HepG2 (cell line): ENCODE measurements at regions of chr1 and their contacts with region 1.

Region 1: GRCh38 chr1:6350416-6351088 is 43.0 kb downstream of the ACOT7 start:
- DNase-seq: no peak
- ATAC-seq: no peak
- H3K4me3 ChIP-seq: no peak overlapping the region
- H3K27ac ChIP-seq: no peak overlapping the region
- H3K4me1 ChIP-seq: peaks cover 42% of the 10 kb centered on the region
- H3K27me3 ChIP-seq: no peaks in the 10 kb centered on the region
- CTCF ChIP-seq: no peak
- EP300 ChIP-seq: no peak
- POLR2A ChIP-seq: no peak
- RAD21 ChIP-seq: no peak

Region 2: DNA sequence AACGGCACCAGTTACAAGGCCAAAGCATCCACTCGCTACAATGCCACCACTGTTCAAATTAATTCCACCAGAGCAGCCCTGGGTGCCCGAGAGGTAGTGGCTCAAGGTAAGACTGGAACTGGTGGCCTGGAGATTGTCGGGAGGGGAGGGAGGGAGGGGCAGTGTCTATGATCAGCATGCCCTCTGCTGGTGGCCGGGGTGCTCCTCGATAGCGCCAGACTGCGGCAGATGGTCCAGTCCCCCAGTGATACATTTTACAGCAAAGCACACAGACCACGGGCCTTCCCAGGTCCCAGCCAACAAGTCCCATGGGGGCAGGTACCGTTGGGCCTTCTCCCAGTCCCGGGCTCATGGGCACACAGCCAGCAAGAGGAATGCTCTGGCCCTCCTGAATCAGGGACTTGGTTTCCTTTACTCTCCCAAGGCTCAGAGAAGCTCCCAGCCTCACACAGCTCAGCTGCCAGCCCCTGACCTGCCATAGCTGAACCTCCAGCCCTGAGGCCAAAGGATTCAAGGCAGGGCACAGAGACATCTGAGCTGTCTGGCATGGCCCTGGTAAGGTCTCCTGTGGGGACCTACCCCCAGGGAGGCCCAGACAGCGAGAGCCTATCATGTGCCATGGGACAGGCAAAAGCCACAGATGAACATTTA is 27.7 kb after region 1 on chr1:
- CTCF ChIA-PET with region 1: interaction called, 3 read pairs
- POLR2A ChIA-PET with region 1: no interaction called
- in situ Hi-C with region 1: no loop called
- intact Hi-C with region 1: loop called (anchors 1 kb)
- DNase-seq: no peak
- ATAC-seq: peak; percentile 96
- H3K4me3 ChIP-seq: no peak overlapping the region
- H3K27ac ChIP-seq: no peak overlapping the region
- H3K4me1 ChIP-seq: peaks cover 6% of the 10 kb centered on the region
- H3K27me3 ChIP-seq: no peaks in the 10 kb centered on the region
- CTCF ChIP-seq: peak; percentile 79
- EP300 ChIP-seq: no peak
- POLR2A ChIP-seq: no peak
- RAD21 ChIP-seq: no peak

Region 3: GRCh38 chr1:6393400-6394187 is 43.0 kb after region 1 on chr1 and contains the start of gene ACOT7:
- CTCF ChIA-PET with region 1: no interaction called
- POLR2A ChIA-PET with region 1: interaction called, 24 read pairs
- in situ Hi-C with region 1: no loop called
- intact Hi-C with region 1: loop called (anchors 5 kb)
- DNase-seq: peak; percentile 79
- ATAC-seq: peak; percentile 93
- H3K4me3 ChIP-seq: peak within 1 kb of the TSS; percentile 66 to 76 (median 70)
- H3K27ac ChIP-seq: peak within 1 kb of the TSS; percentile 97
- H3K4me1 ChIP-seq: peaks cover 46% of the 10 kb centered on the region
- H3K27me3 ChIP-seq: no peaks in the 10 kb centered on the region
- CTCF ChIP-seq: peak; percentile 15; the same call in 1 of the 2 replicates
- EP300 ChIP-seq: no peak
- POLR2A ChIP-seq: peak; percentile 65 to 66; a peak in 3 of 4 replicates
- RAD21 ChIP-seq: peak; percentile 37; the same call in 1 of the 2 replicates
- total RNA-seq, gene ACOT7: 33.0 and 43.2 TPM in 2 replicates

Region 4: DNA sequence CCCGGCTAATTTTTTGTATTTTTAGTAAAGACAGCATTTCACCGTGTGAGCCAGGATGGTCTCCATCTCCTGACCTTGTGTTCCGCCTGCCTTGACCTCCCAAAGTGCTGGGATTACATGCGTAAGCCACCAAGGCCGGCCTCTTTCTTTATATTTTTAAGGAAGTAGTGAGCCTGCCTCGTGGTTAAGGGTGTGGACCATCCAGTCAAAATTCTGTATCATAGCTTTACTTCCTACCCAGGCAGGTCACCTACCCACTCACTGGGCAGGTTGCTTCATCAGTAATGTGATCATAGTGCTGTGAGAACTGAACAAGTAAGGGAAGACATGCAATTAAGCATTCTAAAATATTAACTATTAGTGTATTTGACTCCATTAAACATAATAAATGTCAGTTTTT is 51.1 kb after region 1 on chr1:
- CTCF ChIA-PET with region 1: interaction called, 15 read pairs
- POLR2A ChIA-PET with region 1: no interaction called
- in situ Hi-C with region 1: loop called (anchors 5 kb)
- intact Hi-C with region 1: no loop called
- DNase-seq: no peak
- ATAC-seq: no peak
- H3K4me3 ChIP-seq: no peak overlapping the region
- H3K27ac ChIP-seq: no peak overlapping the region
- H3K4me1 ChIP-seq: peaks cover 15% of the 10 kb centered on the region
- H3K27me3 ChIP-seq: peaks cover 0 to 10% of the 10 kb centered on the region in 2 experiments; a peak in 2 of 5 replicates
- CTCF ChIP-seq: no peak
- EP300 ChIP-seq: no peak
- POLR2A ChIP-seq: no peak
- RAD21 ChIP-seq: no peak

Region 5: GRCh38 chr1:6634371-6635052 is 284.0 kb after region 1 on chr1:
- CTCF ChIA-PET with region 1: no interaction called
- POLR2A ChIA-PET with region 1: no interaction called
- in situ Hi-C with region 1: no loop called
- intact Hi-C with region 1: no loop called
- DNase-seq: peak; percentile 40
- ATAC-seq: peak; percentile 83
- H3K4me3 ChIP-seq: no peak overlapping the region
- H3K27ac ChIP-seq: no peak overlapping the region
- H3K4me1 ChIP-seq: no peaks in the 10 kb centered on the region
- H3K27me3 ChIP-seq: no peaks in the 10 kb centered on the region
- CTCF ChIP-seq: peak; percentile 88
- EP300 ChIP-seq: no peak
- POLR2A ChIP-seq: peak in 1 of 2 experiments; percentile 36; a peak in 2 of 4 replicates
- RAD21 ChIP-seq: peak; percentile 82